GM12878 (cell line): ENCODE measurements at regions of chr3 and their contacts with region 1.

Region 1: DNA sequence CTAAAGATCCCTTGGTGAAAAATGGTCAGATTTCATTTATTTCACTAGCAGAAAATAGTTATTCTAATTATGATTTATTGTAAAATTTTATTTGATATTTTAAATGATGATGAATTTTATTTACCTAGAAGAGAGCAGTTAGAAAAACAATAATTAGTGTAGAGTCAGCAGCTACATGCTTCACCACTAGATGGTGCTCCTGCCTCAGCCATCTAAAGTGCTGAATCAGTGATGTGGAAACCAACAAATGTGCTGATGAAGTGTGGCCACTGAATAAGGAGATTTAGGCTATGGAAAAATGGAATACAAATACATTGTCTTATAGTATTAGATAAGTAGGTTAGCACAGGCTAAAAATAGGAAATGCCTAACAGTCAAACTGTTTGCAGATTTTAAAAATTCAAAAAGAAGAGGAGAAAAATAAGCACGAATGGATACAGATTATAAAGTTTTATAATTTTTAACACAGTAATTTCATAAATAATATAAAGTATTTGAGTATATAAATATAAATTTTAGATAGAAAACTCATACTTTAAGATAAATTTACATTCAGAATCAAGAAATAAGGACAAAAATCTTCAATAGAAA is 109.8 kb downstream of the PPP2R3A start:
- DNase-seq: peak; percentile 40
- ATAC-seq: peak; percentile 89
- H3K4me3 ChIP-seq: no peak overlapping the region
- H3K27ac ChIP-seq: no peak overlapping the region
- H3K4me1 ChIP-seq: no peaks in the 10 kb centered on the region
- H3K27me3 ChIP-seq: no peaks in the 10 kb centered on the region; a peak in 1 of 4 replicates
- CTCF ChIP-seq: peak; percentile 76 to 96 (median 91)
- EP300 ChIP-seq: no peak
- POLR2A ChIP-seq: no peak
- RAD21 ChIP-seq: peak; percentile 99

Region 2: GRCh38 chr3:136196401-136197158 is 121.3 kb after region 1 on chr3:
- CTCF ChIA-PET with region 1: interaction called, 5 read pairs
- POLR2A ChIA-PET with region 1: no interaction called
- RAD21 ChIA-PET with region 1: interaction called, 4 read pairs
- SMC1A ChIA-PET with region 1: interaction called, 3 read pairs
- in situ Hi-C with region 1: no loop called
- intact Hi-C with region 1: loop called (anchors 5 kb)
- DNase-seq: peak; percentile 100
- ATAC-seq: peak; percentile 81
- H3K4me3 ChIP-seq: peak overlapping the region; percentile 69
- H3K27ac ChIP-seq: peak overlapping the region; percentile 99
- H3K4me1 ChIP-seq: peaks cover 9% of the 10 kb centered on the region
- H3K27me3 ChIP-seq: no peaks in the 10 kb centered on the region
- CTCF ChIP-seq: no peak
- EP300 ChIP-seq: no peak; a peak in 2 of 4 replicates
- POLR2A ChIP-seq: peak; percentile 89
- RAD21 ChIP-seq: no peak

Region 3: GRCh38 chr3:136291302-136291701 is 216.0 kb after region 1 on chr3:
- CTCF ChIA-PET with region 1: interaction called, 3 read pairs
- POLR2A ChIA-PET with region 1: no interaction called
- RAD21 ChIA-PET with region 1: interaction called, 3 read pairs
- SMC1A ChIA-PET with region 1: no interaction called
- in situ Hi-C with region 1: no loop called
- intact Hi-C with region 1: loop called (anchors 10 kb)
- DNase-seq: no peak
- ATAC-seq: no peak
- H3K4me3 ChIP-seq: no peak overlapping the region
- H3K27ac ChIP-seq: no peak overlapping the region
- H3K4me1 ChIP-seq: no peaks in the 10 kb centered on the region
- H3K27me3 ChIP-seq: no peaks in the 10 kb centered on the region
- CTCF ChIP-seq: no peak
- EP300 ChIP-seq: no peak
- POLR2A ChIP-seq: no peak
- RAD21 ChIP-seq: no peak

Region 4: DNA sequence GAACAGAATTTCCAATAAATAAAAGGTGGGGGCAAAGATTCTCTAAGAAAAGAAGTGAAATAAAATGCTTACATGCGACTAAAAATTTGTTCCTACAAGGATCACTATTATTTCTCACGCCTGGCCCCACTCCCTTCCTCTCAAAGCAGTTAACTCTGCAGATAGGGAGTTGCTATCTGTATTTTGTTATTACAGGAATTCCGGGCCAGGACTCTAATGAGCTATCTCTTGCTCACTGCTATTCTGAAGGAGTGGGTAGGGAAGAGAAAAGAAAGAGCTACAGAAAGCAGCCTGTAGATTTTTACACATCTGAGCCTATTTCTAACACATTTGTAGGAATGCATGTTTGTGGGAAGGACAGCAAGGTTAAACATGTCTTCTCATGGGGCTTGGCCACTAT is 315.3 kb after region 1 on chr3:
- CTCF ChIA-PET with region 1: interaction called, 51 read pairs
- POLR2A ChIA-PET with region 1: no interaction called
- RAD21 ChIA-PET with region 1: interaction called, 12 read pairs
- SMC1A ChIA-PET with region 1: interaction called, 13 read pairs
- in situ Hi-C with region 1: no loop called
- intact Hi-C with region 1: no loop called
- DNase-seq: no peak
- ATAC-seq: no peak
- H3K4me3 ChIP-seq: no peak overlapping the region
- H3K27ac ChIP-seq: no peak overlapping the region
- H3K4me1 ChIP-seq: peaks cover 5% of the 10 kb centered on the region; the same call in 1 of the 2 replicates
- H3K27me3 ChIP-seq: no peaks in the 10 kb centered on the region
- CTCF ChIP-seq: no peak
- EP300 ChIP-seq: no peak
- POLR2A ChIP-seq: no peak
- RAD21 ChIP-seq: no peak

Region 5: DNA sequence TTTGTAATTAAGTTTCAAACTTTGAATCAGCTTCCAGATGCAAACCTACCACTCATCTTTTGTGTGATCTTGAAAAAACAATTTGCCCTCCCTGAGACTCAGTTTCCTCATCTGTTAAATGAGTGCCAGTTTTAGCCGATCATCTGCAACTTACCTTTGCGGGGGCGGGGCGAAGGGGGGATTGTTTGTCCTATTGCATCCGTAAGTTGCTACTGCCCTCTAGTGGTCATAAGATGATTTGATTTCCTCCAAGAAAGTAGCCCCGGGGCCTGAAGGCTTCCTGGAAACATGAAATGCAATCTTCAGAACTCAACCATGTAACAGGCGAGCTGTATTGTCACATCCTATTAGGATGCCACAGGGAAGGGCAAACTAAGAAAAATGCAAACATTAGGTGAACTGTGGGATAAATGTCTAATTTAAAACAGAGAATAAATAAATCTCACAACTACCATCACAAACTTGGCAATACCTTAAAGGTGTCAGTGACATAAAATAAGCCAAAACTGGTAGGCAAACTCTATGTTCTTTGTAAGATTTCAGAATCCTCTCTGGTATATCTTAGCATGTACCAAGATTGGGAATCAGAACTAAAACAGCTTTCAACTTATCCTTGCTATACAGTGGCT is 1871.1 kb after region 1 on chr3:
- CTCF ChIA-PET with region 1: no interaction called
- POLR2A ChIA-PET with region 1: no interaction called
- RAD21 ChIA-PET with region 1: no interaction called
- SMC1A ChIA-PET with region 1: no interaction called
- in situ Hi-C with region 1: loop called (anchors 25 kb)
- intact Hi-C with region 1: loop called (anchors 10 kb)
- DNase-seq: no peak
- ATAC-seq: peak; percentile 93
- H3K4me3 ChIP-seq: no peak overlapping the region
- H3K27ac ChIP-seq: no peak overlapping the region
- H3K4me1 ChIP-seq: no peaks in the 10 kb centered on the region
- H3K27me3 ChIP-seq: no peaks in the 10 kb centered on the region
- CTCF ChIP-seq: peak; percentile 65 to 69 (median 68); a peak in 5 of 6 replicates
- EP300 ChIP-seq: no peak
- POLR2A ChIP-seq: no peak
- RAD21 ChIP-seq: peak; percentile 91